CD14-positive monocyte (primary cell): ENCODE measurements at regions of chr21 and their contacts with region 1.

Region 1: DNA sequence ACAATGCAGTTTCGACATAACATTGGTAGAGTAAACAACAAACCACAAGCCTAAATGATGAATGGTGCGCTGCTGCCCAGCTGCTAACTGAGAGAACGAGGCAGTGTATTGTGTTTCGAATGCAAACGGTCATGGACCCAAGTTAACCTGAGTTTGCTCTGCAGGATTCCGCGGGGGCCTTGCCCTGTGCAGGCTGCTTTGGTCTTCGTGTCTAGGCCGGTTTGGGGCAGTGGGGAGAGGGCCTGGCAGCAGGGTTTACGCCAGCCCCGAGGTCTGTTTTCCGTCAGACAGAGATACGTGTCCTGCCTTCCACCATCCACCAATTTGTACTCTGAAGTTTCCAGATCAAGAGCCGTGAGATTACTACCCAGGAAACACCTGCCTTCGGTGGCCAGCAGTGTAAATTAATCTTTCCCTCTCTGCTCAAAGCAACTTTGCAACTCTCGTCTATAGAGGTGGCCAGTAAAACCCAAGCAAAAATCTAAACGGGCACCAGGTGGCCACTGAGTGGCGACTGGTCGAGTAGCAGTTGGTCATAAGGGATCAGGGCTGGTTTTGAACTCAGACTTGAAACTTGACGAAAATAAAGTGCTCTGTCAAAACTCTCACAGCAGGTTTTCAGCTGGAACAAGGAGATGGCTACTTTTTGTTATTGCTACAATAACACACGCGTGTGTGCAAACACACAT is 6.3 kb upstream of the PRDM15 start:
- DNase-seq: no peak
- H3K4me3 ChIP-seq: no peak overlapping the region
- H3K4me3 Mint-ChIP-seq: peak overlapping the region; percentile 3 to 23
- H3K27ac ChIP-seq: no peak overlapping the region
- H3K27ac Mint-ChIP-seq: peak overlapping the region in 1 of 7 donors; percentile 33
- H3K4me1 ChIP-seq: peaks cover 0 to 6% of the 10 kb centered on the region in 2 donors
- H3K4me1 Mint-ChIP-seq: peaks cover 16% of the 10 kb centered on the region
- H3K27me3 ChIP-seq: no peaks in the 10 kb centered on the region
- H3K27me3 Mint-ChIP-seq: peaks cover 2 to 8% (median 2%) of the 10 kb centered on the region in 3 donors
- CTCF ChIP-seq: peak; percentile 11

Region 2: GRCh38 chr21:41895643-41896493 is 10.4 kb after region 1 on chr21:
- intact Hi-C with region 1: loop called in 1 of 2 experiments (anchors 1 kb)
- DNase-seq: peak in 2 of 3 donors; percentile 5 to 17
- H3K4me3 ChIP-seq: no peak overlapping the region
- H3K4me3 Mint-ChIP-seq: peak overlapping the region in 1 of 2 donors; percentile 70
- H3K27ac ChIP-seq: no peak overlapping the region
- H3K27ac Mint-ChIP-seq: peak overlapping the region in 3 of 7 donors; percentile 14 to 33 (median 15)
- H3K4me1 ChIP-seq: peaks cover 0 to 3% of the 10 kb centered on the region in 2 donors
- H3K4me1 Mint-ChIP-seq: peaks cover 15% of the 10 kb centered on the region
- H3K27me3 ChIP-seq: no peaks in the 10 kb centered on the region
- H3K27me3 Mint-ChIP-seq: peaks cover 0 to 3% (median 0%) of the 10 kb centered on the region in 3 donors
- CTCF ChIP-seq: no peak

Region 3: GRCh38 chr21:41973861-41974751 is 88.6 kb after region 1 on chr21:
- intact Hi-C with region 1: no loop called
- DNase-seq: peak in 2 of 3 donors; percentile 11 to 39
- H3K4me3 ChIP-seq: no peak overlapping the region
- H3K4me3 Mint-ChIP-seq: no peak overlapping the region
- H3K27ac ChIP-seq: no peak overlapping the region
- H3K27ac Mint-ChIP-seq: no peak overlapping the region
- H3K4me1 ChIP-seq: peaks cover 8 to 11% of the 10 kb centered on the region in 2 donors
- H3K4me1 Mint-ChIP-seq: peaks cover 10% of the 10 kb centered on the region
- H3K27me3 ChIP-seq: no peaks in the 10 kb centered on the region
- H3K27me3 Mint-ChIP-seq: peaks cover 0 to 2% (median 2%) of the 10 kb centered on the region in 3 donors
- CTCF ChIP-seq: no peak